Heart right ventricle (tissue), 16 donors: ENCODE measurements at regions of chr3 and their contacts with region 1.

Region 1: GRCh38 chr3:53795789-53796560 is 50.2 kb downstream of the CHDH start:
- DNase-seq: peak; percentile 63 to 72
- ATAC-seq: peak; percentile 75 to 97 (median 91)
- H3K4me3 ChIP-seq: no peak overlapping the region
- H3K27ac ChIP-seq: no peak overlapping the region
- H3K4me1 ChIP-seq: peaks cover 0 to 9% (median 0%) of the 10 kb centered on the region in 9 donors
- H3K27me3 ChIP-seq: peaks cover 0 to 10% (median 0%) of the 10 kb centered on the region in 7 donors
- CTCF ChIP-seq: no peak

Region 2: DNA sequence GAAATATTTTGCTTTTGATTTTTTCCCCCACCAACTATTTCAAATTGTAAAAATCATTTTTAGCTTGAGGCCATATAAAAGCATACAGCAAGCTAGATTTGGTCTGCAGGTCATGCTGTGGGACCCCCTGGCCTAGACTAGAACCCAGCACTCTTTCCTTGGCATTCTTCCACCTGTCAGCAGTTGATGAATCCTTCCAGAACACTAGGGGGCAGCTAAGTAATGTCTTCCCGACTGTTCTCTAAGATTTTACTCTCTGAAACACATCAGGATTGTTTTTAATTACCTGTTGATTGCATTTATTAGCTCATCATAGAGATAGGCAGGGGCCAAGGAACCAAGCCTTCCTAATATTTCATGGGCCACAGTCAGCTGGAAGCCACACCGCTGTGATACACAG is 127.1 kb before region 1 on chr3:
- intact Hi-C with region 1: no loop called
- DNase-seq: no peak
- ATAC-seq: no peak
- H3K4me3 ChIP-seq: no peak overlapping the region
- H3K27ac ChIP-seq: no peak overlapping the region
- H3K4me1 ChIP-seq: no peaks in the 10 kb centered on the region
- H3K27me3 ChIP-seq: peaks cover 0 to 15% (median 7%) of the 10 kb centered on the region in 7 donors
- CTCF ChIP-seq: peak in 4 of 9 donors; percentile 18 to 32 (median 28)

Region 3: DNA sequence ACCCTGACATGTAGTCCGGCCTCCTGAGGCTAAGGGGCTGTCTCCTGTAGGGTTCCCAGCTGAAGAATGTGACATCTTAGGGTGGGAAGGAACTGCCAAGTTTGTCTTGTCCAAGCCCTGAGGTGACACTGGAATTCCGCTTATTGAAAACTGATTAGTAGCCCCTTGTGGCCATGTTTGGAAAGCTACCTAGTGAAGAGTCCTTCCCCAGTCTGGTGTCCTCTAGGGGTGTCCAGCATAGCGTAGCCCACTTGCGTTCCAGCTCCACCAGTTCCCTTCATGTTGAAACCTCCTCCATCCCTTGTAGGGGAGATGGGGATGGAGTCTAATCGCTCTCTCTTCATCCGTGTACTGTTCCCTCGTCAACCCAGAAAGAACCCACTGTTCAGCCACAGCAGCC is 29.3 kb before region 1 on chr3:
- intact Hi-C with region 1: loop called in 1 of 10 experiments (anchors 2 kb)
- DNase-seq: no peak
- ATAC-seq: no peak
- H3K4me3 ChIP-seq: no peak overlapping the region
- H3K27ac ChIP-seq: no peak overlapping the region
- H3K4me1 ChIP-seq: no peaks in the 10 kb centered on the region
- H3K27me3 ChIP-seq: peaks cover 0 to 36% (median 14%) of the 10 kb centered on the region in 7 donors
- CTCF ChIP-seq: no peak

Region 4: GRCh38 chr3:54506603-54507002 is 710.6 kb after region 1 on chr3:
- intact Hi-C with region 1: no loop called
- DNase-seq: no peak
- ATAC-seq: no peak
- H3K4me3 ChIP-seq: no peak overlapping the region
- H3K27ac ChIP-seq: no peak overlapping the region
- H3K4me1 ChIP-seq: no peaks in the 10 kb centered on the region
- H3K27me3 ChIP-seq: no peaks in the 10 kb centered on the region
- CTCF ChIP-seq: no peak